ENCODE measurements at regions of chr18 and their contacts with region 1.

Region 1: DNA sequence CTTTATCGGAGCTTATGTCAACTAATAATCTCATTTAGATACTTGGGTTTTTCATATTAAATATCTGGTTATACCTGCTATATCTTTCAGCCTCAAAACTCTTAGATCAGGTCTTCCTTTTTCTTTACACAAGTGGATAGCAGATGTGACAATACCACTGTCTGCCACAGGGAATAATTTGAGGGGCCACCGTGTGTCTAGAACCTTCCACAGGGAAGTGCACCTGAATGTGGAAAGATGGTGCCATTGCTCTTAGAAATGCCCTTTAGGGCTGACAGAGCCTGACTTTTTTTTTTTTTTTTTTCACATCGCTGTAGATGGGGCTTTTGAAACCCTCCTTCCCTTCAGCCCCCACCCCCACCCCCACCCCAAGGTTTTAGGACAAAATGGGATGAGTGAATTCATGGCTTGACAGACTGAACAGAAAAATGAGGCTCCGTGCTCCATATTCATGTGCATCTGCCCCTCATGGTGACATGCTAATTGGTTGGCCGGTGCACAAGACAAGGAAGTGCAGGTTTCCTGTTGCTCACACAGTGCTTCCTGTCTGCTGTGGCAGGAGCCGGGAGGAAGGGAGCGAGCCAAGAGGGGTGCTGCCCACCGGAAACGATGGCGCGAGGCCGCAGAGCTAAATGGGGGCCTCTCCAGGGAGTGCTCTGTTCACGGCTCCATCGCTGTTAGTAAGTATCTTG is 246.0 kb downstream of the LDLRAD4 start:
- DNase-seq: no peak
- H3K4me3 ChIP-seq: no peak overlapping the region
- H3K27ac ChIP-seq: no peak overlapping the region
- H3K4me1 ChIP-seq: no peaks in the 10 kb centered on the region
- H3K27me3 ChIP-seq: no peaks in the 10 kb centered on the region
- CTCF ChIP-seq: no peak

Region 2: DNA sequence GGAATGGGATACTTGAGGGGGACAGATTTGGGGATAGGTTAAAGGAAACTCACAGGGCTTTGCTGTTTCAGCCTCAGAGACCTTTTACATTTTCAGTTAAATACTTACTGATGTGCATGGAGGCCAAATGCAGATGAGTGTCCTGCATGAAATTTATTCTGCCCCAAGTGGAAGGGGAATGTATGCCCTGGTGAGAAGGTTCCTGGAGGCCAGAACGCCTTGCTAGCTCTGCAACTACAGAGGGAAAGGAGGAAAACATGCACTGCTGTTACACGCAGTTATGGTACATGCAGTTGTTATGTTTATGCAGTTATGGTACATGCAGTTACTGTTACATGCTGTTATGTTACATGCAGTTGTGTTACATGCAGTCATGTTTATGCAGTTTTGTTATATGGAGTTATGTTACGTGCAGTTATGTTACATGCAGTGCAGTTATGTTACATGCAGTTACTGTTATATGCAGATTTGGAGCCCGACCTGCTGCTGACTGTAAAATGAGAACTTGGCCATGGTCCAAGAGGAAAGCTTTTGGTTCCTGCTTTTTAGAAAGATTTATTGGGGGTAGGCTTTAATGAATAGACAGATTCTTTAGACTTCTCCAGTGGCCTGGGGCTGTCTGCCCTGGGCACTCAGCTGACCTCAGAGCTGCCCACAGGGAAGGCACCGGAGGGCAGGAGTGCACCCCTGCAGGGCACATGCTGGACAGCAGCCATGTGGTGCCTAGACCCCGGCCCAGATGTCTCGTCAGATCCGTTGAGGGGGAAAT is 161.9 kb before region 1 on chr18:
- CTCF ChIA-PET with region 1: no interaction called
- dilution Hi-C with region 1: loop called (anchors 25 kb)
- in situ Hi-C with region 1: no loop called
- intact Hi-C with region 1: no loop called
- DNase-seq: no peak
- H3K4me3 ChIP-seq: no peak overlapping the region
- H3K27ac ChIP-seq: no peak overlapping the region
- H3K4me1 ChIP-seq: no peaks in the 10 kb centered on the region
- H3K27me3 ChIP-seq: no peaks in the 10 kb centered on the region
- CTCF ChIP-seq: no peak

Region 3: GRCh38 chr18:14949800-14950664 is 1485.5 kb after region 1 on chr18:
- CTCF ChIA-PET with region 1: no interaction called
- dilution Hi-C with region 1: no loop called
- in situ Hi-C with region 1: no loop called
- intact Hi-C with region 1: no loop called
- DNase-seq: no peak
- H3K4me3 ChIP-seq: no peak overlapping the region
- H3K27ac ChIP-seq: no peak overlapping the region
- H3K4me1 ChIP-seq: no peaks in the 10 kb centered on the region
- H3K27me3 ChIP-seq: no peaks in the 10 kb centered on the region
- CTCF ChIP-seq: no peak

Measured in mammary epithelial cell (primary cell).